ENCODE measurements at regions of chr3 and their contacts with region 1.

Region 1: GRCh38 chr3:151168269-151169094 is 34.5 kb downstream of the GPR171 start:
- DNase-seq: no peak
- H3K4me3 ChIP-seq: no peak overlapping the region
- H3K27ac ChIP-seq: peak overlapping the region in 2 of 4 donors; percentile 8 to 30
- H3K4me1 ChIP-seq: peaks cover 0 to 5% (median 0%) of the 10 kb centered on the region in 4 donors
- H3K27me3 ChIP-seq: no peaks in the 10 kb centered on the region
- CTCF ChIP-seq: peak; percentile 70 to 74 (median 73)
- EP300 ChIP-seq: no peak
- POLR2A ChIP-seq: no peak

Region 2: DNA sequence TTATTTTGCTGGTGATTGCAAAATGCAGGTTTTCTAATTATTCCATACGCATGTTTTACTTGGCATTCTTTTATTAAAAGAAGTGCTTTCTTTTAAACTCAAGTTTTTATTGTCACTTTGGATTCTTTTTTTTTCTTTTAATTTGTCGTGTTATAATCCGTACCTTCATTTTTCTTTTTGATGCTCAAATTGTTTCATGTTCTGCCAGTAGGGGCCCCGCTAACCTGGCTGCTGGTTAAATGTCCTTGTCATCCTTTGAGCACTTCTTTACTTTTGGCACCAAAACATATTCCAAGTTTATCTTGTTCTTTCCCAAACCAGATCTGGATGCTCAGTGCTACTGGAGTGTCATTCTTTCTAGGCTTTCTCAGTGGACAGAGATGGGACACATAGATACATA is 51.4 kb before region 1 on chr3:
- intact Hi-C with region 1: no loop called
- DNase-seq: no peak
- H3K4me3 ChIP-seq: no peak overlapping the region
- H3K27ac ChIP-seq: no peak overlapping the region
- H3K4me1 ChIP-seq: no peaks in the 10 kb centered on the region
- H3K27me3 ChIP-seq: no peaks in the 10 kb centered on the region
- CTCF ChIP-seq: no peak
- EP300 ChIP-seq: no peak
- POLR2A ChIP-seq: no peak

Region 3: GRCh38 chr3:151135541-151136337 is 32.7 kb before region 1 on chr3:
- intact Hi-C with region 1: no loop called
- DNase-seq: no peak
- H3K4me3 ChIP-seq: no peak overlapping the region
- H3K27ac ChIP-seq: no peak overlapping the region
- H3K4me1 ChIP-seq: no peaks in the 10 kb centered on the region
- H3K27me3 ChIP-seq: no peaks in the 10 kb centered on the region
- CTCF ChIP-seq: no peak
- EP300 ChIP-seq: no peak
- POLR2A ChIP-seq: no peak

Region 4: GRCh38 chr3:151227807-151228665 is 59.6 kb after region 1 on chr3:
- intact Hi-C with region 1: loop called (anchors 5 kb)
- DNase-seq: peak; percentile 95
- H3K4me3 ChIP-seq: no peak overlapping the region
- H3K27ac ChIP-seq: peak overlapping the region in 3 of 4 donors; percentile 44 to 66 (median 45)
- H3K4me1 ChIP-seq: peaks cover 13 to 43% (median 38%) of the 10 kb centered on the region in 4 donors
- H3K27me3 ChIP-seq: no peaks in the 10 kb centered on the region
- CTCF ChIP-seq: peak; percentile 87 to 93 (median 91)
- EP300 ChIP-seq: no peak
- POLR2A ChIP-seq: no peak

Measured in esophagus muscularis mucosa (tissue), 4 donors.